IMR-90 (cell line): ENCODE measurements at regions of chr7 and their contacts with region 1.

Region 1: GRCh38 chr7:111274857-111275256 is 183.9 kb downstream of the LRRN3 start:
- DNase-seq: peak; percentile 43
- ATAC-seq: peak; percentile 40; the same call in 1 of the 2 replicates
- H3K4me3 ChIP-seq: no peak overlapping the region
- H3K27ac ChIP-seq: no peak overlapping the region
- H3K4me1 ChIP-seq: no peaks in the 10 kb centered on the region
- H3K27me3 ChIP-seq: no peaks in the 10 kb centered on the region
- CTCF ChIP-seq: no peak
- POLR2A ChIP-seq: no peak
- RAD21 ChIP-seq: no peak

Region 2: GRCh38 chr7:111362506-111363054 is 87.7 kb after region 1 on chr7:
- CTCF ChIA-PET with region 1: no interaction called
- POLR2A ChIA-PET with region 1: no interaction called
- dilution Hi-C with region 1: no loop called
- in situ Hi-C with region 1: no loop called
- intact Hi-C with region 1: loop called (anchors 5 kb)
- DNase-seq: peak; percentile 78
- ATAC-seq: peak; percentile 82
- H3K4me3 ChIP-seq: no peak overlapping the region
- H3K27ac ChIP-seq: peak overlapping the region; percentile 52; the same call in 1 of the 2 replicates
- H3K4me1 ChIP-seq: peaks cover 3% of the 10 kb centered on the region; the same call in 1 of the 2 replicates
- H3K27me3 ChIP-seq: no peaks in the 10 kb centered on the region
- CTCF ChIP-seq: no peak
- POLR2A ChIP-seq: no peak
- RAD21 ChIP-seq: no peak